HCT116 (cell line): ENCODE measurements at regions of chr17 and their contacts with region 1.

Region 1: DNA sequence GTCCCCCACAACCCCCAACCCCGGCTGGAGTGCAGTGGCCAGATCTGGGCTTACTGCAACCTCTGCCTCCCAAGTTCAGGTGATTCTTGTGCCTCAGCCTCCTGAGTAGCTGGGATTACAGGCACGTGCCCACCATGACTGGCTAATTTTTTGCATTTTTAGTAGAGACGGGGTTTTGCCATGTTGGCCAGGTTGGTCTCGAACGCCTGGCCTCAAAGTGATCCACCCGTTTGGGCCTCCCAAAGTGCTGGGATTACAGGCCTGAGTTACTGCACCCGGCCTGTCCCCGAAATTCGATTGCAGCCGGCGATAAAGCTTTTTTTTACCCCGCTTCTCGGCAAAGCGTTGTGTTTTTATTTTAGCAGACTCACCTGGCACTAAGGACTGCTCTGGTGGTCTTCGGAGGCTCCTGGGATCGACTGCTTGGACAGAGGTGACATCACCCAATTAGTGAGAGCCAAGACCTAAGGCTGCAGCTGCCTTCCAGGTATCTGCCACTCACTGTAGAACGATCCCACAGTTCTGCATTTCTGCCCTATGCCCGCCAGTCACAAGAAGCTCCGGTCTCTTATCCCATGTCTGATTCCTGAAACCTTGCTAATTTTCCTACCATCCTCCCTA is 82.2 kb upstream of the ARL4D start:
- DNase-seq: no peak
- ATAC-seq: no peak
- H3K4me3 ChIP-seq: no peak overlapping the region
- H3K27ac ChIP-seq: no peak overlapping the region
- H3K4me1 ChIP-seq: no peaks in the 10 kb centered on the region; a peak in 3 of 4 replicates
- H3K27me3 ChIP-seq: no peaks in the 10 kb centered on the region
- CTCF ChIP-seq: no peak
- POLR2A ChIP-seq: no peak
- RAD21 ChIP-seq: no peak

Region 2: GRCh38 chr17:42997984-42998938 is 318.4 kb before region 1 on chr17 and contains the start of gene RPL27:
- CTCF ChIA-PET with region 1: no interaction called
- POLR2A ChIA-PET with region 1: interaction called, 10 read pairs
- RAD21 ChIA-PET with region 1: no interaction called
- intact Hi-C with region 1: no loop called
- DNase-seq: peak; percentile 100
- ATAC-seq: peak; percentile 90
- H3K4me3 ChIP-seq: peak within 1 kb of the TSS; percentile 97 to 99
- H3K27ac ChIP-seq: peak within 1 kb of the TSS; percentile 92
- H3K4me1 ChIP-seq: peaks cover 13 to 48% of the 10 kb centered on the region in 2 experiments
- H3K27me3 ChIP-seq: no peaks in the 10 kb centered on the region
- CTCF ChIP-seq: peak; percentile 77 to 96 (median 79)
- POLR2A ChIP-seq: peak; percentile 78
- RAD21 ChIP-seq: peak; percentile 84
- total RNA-seq, gene RPL27: 1,295 TPM

Region 3: GRCh38 chr17:43170766-43171585 is 145.7 kb before region 1 on chr17 and contains the start of gene NBR1:
- CTCF ChIA-PET with region 1: no interaction called
- POLR2A ChIA-PET with region 1: interaction called, 23 read pairs
- RAD21 ChIA-PET with region 1: no interaction called
- intact Hi-C with region 1: no loop called
- DNase-seq: peak; percentile 99
- ATAC-seq: peak; percentile 76
- H3K4me3 ChIP-seq: peak within 1 kb of the TSS; percentile 76 to 98
- H3K27ac ChIP-seq: peak within 1 kb of the TSS; percentile 72
- H3K4me1 ChIP-seq: peaks cover 8 to 23% of the 10 kb centered on the region in 2 experiments
- H3K27me3 ChIP-seq: no peaks in the 10 kb centered on the region
- CTCF ChIP-seq: 0 out of 6 replicates have a peak, but pooled peaks of 1 of the 3 experiments have one; percentile 16
- POLR2A ChIP-seq: peak; percentile 65
- RAD21 ChIP-seq: peak; percentile 26
- total RNA-seq, gene NBR1: 60.8 TPM

Region 4: DNA sequence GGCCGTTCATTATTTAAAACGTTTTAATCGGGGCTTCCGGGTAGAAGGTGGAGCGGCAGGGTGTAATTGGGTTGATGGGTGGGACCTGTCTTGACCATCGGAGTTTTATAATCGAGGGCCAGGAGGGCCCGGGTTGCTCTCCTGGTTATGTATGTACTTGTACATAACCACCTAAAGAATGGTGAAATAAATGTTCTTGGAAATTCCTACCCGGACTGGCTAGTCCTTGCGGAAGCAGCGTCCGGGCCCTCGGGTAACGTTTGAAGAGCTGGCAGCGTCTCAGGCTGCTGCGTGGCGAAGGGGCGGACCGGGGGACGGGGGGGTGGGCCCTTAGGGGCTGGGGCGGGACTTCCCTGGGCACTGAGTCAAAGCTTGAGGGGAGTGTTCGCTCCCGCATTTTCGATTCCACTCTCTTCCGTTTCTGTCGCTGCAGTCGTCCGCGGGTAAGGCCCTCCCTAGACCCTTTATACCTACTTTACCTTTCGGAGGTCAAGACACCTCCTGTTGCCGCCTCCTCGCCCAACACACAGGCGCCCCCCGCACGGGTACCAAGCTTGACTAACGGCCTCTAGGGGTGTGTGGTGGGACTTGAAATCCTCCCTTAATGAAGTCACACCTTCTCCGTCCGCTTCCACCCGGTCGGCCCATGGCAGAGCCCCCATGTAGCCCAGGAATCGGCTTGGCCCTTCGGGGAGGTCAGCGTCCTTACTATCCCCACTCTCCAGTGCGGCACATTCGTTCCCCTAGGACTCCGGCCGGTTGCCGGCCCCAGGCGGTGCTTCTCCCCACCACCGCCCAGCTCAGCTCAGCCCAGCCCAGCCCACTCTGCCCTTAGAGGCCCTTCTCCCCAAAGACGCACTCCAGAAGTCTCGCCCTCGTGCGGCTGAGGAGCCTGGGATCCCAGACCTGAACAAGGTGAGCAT is 104.9 kb before region 1 on chr17 and contains the start of gene TMEM106A:
- CTCF ChIA-PET with region 1: no interaction called
- POLR2A ChIA-PET with region 1: interaction called, 33 read pairs
- RAD21 ChIA-PET with region 1: no interaction called
- intact Hi-C with region 1: no loop called
- DNase-seq: peak; percentile 43
- ATAC-seq: peak; percentile 91
- H3K4me3 ChIP-seq: peak within 1 kb of the TSS; percentile 63 to 78
- H3K27ac ChIP-seq: peak within 1 kb of the TSS; percentile 64
- H3K4me1 ChIP-seq: peaks cover 6 to 19% of the 10 kb centered on the region in 2 experiments; a peak in 2 of 4 replicates
- H3K27me3 ChIP-seq: no peaks in the 10 kb centered on the region
- CTCF ChIP-seq: peak in 2 of 3 experiments; percentile 43 to 53; a peak in 3 of 6 replicates
- POLR2A ChIP-seq: peak; percentile 20
- RAD21 ChIP-seq: no peak
- total RNA-seq, gene TMEM106A: 3.5 TPM

Region 5: GRCh38 chr17:43367737-43368242 is 51.2 kb after region 1 on chr17:
- CTCF ChIA-PET with region 1: no interaction called
- POLR2A ChIA-PET with region 1: interaction called, 76 read pairs
- RAD21 ChIA-PET with region 1: no interaction called
- intact Hi-C with region 1: no loop called
- DNase-seq: peak; percentile 96
- ATAC-seq: peak; percentile 58
- H3K4me3 ChIP-seq: peak overlapping the region; percentile 1 to 58; a peak in 3 of 4 replicates
- H3K27ac ChIP-seq: peak overlapping the region; percentile 95
- H3K4me1 ChIP-seq: peaks cover 20 to 37% of the 10 kb centered on the region in 2 experiments
- H3K27me3 ChIP-seq: no peaks in the 10 kb centered on the region
- CTCF ChIP-seq: no peak
- POLR2A ChIP-seq: peak; percentile 100
- RAD21 ChIP-seq: no peak; the same call in 1 of the 2 replicates